Activated CD8-positive, alpha-beta T cell treated with anti-CD3 and anti-CD28 coated beads for 36 hours (primary cell): ENCODE measurements at regions of chr17 and their contacts with region 1.

Region 1: DNA sequence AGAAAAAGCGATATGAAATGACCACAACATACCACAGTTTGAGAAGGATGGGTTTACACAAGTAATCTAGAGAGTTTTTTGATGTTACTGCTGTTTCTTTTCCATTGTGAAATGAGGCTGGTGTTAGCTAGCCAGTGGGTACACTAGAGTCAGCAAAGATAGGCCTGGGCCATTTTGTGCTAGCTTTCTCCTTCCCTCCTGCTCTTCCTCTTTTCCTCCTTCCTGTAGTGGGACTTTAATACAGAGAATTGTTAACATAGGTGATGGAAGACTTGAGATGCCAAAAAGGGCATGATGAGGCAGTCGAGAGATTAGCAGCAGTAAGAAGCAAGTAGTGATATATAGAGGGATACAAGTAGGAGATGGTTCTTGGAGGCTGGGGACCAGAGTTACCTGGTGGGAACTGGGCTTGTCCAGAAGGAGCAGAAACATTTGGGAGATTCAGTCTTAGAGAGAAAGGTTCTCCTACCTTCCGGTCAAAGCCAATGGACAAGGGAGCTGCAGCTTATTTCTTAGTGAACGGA is 7.7 kb downstream of the NSRP1 start:
- DNase-seq: no peak
- ATAC-seq: no peak
- H3K4me3 Mint-ChIP-seq: no peak overlapping the region
- H3K27ac Mint-ChIP-seq: no peak overlapping the region
- H3K4me1 Mint-ChIP-seq: peaks cover 41% of the 10 kb centered on the region
- H3K27me3 Mint-ChIP-seq: no peaks in the 10 kb centered on the region
- CTCF ChIP-seq: no peak

Region 2: GRCh38 chr17:29140051-29140621 is 984.2 kb before region 1 on chr17:
- CTCF ChIA-PET with region 1: no interaction called
- POLR2A ChIA-PET with region 1: no interaction called
- intact Hi-C with region 1: no loop called
- DNase-seq: peak; percentile 96
- ATAC-seq: peak; percentile 74
- H3K4me3 Mint-ChIP-seq: peak overlapping the region; percentile 92
- H3K27ac Mint-ChIP-seq: peak overlapping the region; percentile 99
- H3K4me1 Mint-ChIP-seq: peaks cover 62% of the 10 kb centered on the region
- H3K27me3 Mint-ChIP-seq: no peaks in the 10 kb centered on the region
- CTCF ChIP-seq: no peak

Region 3: DNA sequence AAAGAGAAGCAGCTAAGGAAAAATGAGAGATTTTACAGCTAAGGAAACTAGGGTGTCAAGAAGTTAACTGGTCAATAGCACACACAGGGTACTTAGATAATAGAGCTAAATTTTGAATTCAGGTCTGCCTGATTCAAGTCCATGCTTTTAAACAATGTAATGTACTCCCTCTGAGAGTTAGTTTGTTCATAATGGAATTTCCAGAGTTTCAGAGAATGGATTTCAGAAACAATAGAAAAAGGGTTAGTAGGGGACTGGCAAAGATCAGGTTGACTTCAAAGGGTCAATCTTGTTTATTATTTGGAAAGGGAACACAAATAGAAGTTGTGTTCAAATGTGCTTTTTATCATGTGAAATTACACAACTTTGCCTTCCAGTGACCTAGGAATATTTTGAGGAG is 10.2 kb after region 1 on chr17:
- CTCF ChIA-PET with region 1: interaction called, 31 read pairs
- POLR2A ChIA-PET with region 1: no interaction called
- intact Hi-C with region 1: no loop called
- DNase-seq: no peak
- ATAC-seq: no peak
- H3K4me3 Mint-ChIP-seq: no peak overlapping the region
- H3K27ac Mint-ChIP-seq: no peak overlapping the region
- H3K4me1 Mint-ChIP-seq: peaks cover 27% of the 10 kb centered on the region
- H3K27me3 Mint-ChIP-seq: no peaks in the 10 kb centered on the region
- CTCF ChIP-seq: no peak

Region 4: GRCh38 chr17:30186761-30187160 is 62.4 kb after region 1 on chr17:
- CTCF ChIA-PET with region 1: interaction called, 11 read pairs
- POLR2A ChIA-PET with region 1: no interaction called
- intact Hi-C with region 1: no loop called
- DNase-seq: no peak
- ATAC-seq: no peak
- H3K4me3 Mint-ChIP-seq: no peak overlapping the region
- H3K27ac Mint-ChIP-seq: no peak overlapping the region
- H3K4me1 Mint-ChIP-seq: peaks cover 5% of the 10 kb centered on the region
- H3K27me3 Mint-ChIP-seq: no peaks in the 10 kb centered on the region
- CTCF ChIP-seq: no peak

Region 5: DNA sequence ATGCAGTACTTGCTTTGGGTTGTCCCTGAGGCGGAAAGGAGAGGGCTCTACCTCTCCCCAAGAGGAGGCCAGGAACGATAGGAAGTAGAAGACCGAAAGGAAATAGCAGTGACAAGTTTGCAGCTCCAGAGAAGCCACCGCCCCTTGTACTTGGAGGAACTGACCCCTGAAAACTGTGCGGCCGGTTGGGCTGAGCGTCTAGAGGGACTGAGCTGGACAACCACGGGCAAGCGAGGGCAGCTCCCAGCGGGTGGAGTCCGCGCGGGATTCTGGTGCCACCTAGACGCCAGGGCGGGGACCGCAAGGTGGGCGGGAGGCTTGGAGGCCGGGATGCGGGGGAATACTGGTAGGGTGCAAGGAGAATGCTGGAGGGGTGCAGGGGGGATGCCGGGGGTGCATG is 112.4 kb after region 1 on chr17:
- CTCF ChIA-PET with region 1: interaction called, 23 read pairs
- POLR2A ChIA-PET with region 1: no interaction called
- intact Hi-C with region 1: no loop called
- DNase-seq: peak; percentile 29
- ATAC-seq: no peak
- H3K4me3 Mint-ChIP-seq: no peak overlapping the region
- H3K27ac Mint-ChIP-seq: no peak overlapping the region
- H3K4me1 Mint-ChIP-seq: peaks cover 21% of the 10 kb centered on the region
- H3K27me3 Mint-ChIP-seq: peaks cover 57% of the 10 kb centered on the region
- CTCF ChIP-seq: no peak

Region 6: GRCh38 chr17:30323895-30324319 is 199.6 kb after region 1 on chr17:
- CTCF ChIA-PET with region 1: interaction called, 10 read pairs
- POLR2A ChIA-PET with region 1: no interaction called
- intact Hi-C with region 1: no loop called
- DNase-seq: peak; percentile 59
- ATAC-seq: peak; percentile 92
- H3K4me3 Mint-ChIP-seq: no peak overlapping the region
- H3K27ac Mint-ChIP-seq: peak overlapping the region; percentile 56
- H3K4me1 Mint-ChIP-seq: peaks cover 24% of the 10 kb centered on the region
- H3K27me3 Mint-ChIP-seq: no peaks in the 10 kb centered on the region
- CTCF ChIP-seq: no peak